Endothelial cell of umbilical vein (primary cell): ENCODE measurements at regions of chr20 and their contacts with region 1.

Region 1: DNA sequence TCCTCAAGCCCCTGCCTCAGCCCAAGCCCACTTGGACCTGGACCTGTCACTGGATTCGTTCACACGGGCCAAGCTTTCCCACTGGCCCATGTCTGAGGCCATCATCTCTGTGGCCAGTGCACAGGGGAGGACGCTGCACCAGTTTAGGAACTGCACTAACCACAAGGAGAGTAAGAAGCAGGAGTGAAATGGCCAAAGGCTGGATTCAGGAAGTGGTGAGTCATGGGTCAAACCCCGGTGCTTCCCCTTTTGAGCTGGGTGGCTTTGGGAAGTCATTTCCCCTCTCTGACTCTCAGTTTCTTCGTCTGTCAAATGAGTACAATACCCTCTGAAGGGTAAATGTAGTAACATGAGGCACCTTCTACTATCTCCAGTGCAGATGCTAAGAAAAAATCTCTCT is 87.9 kb downstream of the CD40 start:
- DNase-seq: peak; percentile 47
- H3K4me3 ChIP-seq: no peak overlapping the region
- H3K27ac ChIP-seq: no peak overlapping the region
- H3K4me1 ChIP-seq: peaks cover 15% of the 10 kb centered on the region
- H3K27me3 ChIP-seq: peaks cover 11 to 16% of the 10 kb centered on the region in 2 experiments
- CTCF ChIP-seq: no peak
- POLR2A ChIP-seq: no peak

Region 2: DNA sequence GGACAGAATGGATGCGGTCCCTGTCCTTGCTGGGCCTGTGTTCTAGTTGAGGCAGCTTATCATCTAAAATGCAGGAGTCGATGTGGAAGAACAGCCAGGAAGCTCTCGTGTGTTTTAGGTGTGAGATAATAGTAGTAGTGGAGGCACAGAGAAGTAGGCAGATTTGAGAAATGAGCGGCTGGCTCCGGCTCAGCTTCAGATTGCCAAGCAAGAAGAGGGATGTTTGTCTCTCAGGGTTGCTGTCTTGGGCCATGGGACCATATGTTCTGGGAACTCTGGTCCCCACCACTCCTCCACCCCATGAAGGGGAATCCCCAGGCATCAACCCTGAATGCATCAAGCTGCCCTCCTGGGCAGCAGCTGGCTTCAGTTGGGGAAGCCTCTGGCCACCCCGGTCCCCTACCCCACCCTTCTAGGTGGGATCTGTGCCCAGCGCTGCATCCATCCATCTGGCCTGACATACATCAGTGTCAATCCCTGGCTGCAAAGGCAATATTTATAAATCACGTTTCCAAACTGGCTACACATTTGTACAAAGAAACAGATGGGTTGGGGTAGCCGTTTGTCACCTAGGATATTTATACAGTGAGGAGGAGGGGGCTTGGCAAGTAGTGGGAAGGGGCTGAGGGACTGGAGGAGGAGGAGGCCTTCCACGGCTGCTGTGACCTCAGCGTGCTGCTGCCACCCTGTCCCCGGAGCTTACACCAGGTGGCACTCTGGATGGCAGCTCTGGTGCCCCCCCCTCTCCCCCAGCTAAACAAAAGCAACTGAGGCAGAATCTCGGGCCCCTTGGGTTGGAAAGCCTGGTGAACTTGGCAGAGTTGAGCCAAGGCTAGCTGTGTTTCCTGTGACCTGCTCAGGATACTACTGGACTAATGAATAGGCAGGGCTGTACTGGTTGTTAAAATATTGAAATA is 23.5 kb before region 1 on chr20:
- CTCF ChIA-PET with region 1: no interaction called
- POLR2A ChIA-PET with region 1: no interaction called
- dilution Hi-C with region 1: no loop called
- intact Hi-C with region 1: no loop called
- DNase-seq: no peak
- H3K4me3 ChIP-seq: no peak overlapping the region
- H3K27ac ChIP-seq: no peak overlapping the region
- H3K4me1 ChIP-seq: no peaks in the 10 kb centered on the region
- H3K27me3 ChIP-seq: no peaks in the 10 kb centered on the region
- CTCF ChIP-seq: no peak
- POLR2A ChIP-seq: no peak

Region 3: GRCh38 chr20:46215913-46216707 is 10.1 kb after region 1 on chr20:
- CTCF ChIA-PET with region 1: interaction called, 3 read pairs
- POLR2A ChIA-PET with region 1: no interaction called
- dilution Hi-C with region 1: no loop called
- intact Hi-C with region 1: loop called (anchors 1 kb)
- DNase-seq: peak; percentile 18
- H3K4me3 ChIP-seq: no peak overlapping the region
- H3K27ac ChIP-seq: no peak overlapping the region
- H3K4me1 ChIP-seq: peaks cover 9% of the 10 kb centered on the region
- H3K27me3 ChIP-seq: no peaks in the 10 kb centered on the region
- CTCF ChIP-seq: no peak
- POLR2A ChIP-seq: no peak

Region 4: DNA sequence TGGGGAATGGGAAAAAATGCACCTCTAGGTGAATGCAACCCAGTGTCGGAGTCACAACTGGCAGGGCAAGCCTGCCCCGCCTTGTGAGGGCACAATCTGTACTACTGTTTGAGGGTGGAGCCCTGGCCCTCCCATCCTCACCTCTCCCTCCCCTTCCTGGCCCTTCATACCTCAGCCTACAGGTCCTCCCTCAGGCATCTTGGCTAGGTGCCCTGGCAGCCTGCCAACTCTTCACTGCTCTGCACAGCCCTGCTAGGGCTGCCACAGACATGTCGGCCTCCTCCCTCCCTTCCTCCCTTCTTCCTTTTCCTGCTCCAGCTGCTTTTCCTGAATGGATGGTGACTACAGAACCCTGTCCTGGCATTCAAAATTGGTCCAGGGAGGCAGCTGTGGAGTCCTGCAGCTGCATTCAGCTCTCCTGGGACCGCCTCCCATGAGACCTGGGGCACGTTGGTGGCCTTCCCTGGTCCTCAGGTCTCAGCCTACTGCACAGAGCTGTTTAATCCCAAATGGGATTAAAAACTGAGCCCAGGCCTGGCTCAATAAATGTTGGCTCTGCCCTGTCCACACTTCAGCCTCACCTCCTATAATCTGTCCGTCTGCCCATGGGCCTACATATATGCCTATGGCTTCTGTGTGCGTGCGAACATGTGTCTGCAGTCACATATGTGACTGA is 49.5 kb after region 1 on chr20:
- CTCF ChIA-PET with region 1: no interaction called
- POLR2A ChIA-PET with region 1: no interaction called
- dilution Hi-C with region 1: no loop called
- intact Hi-C with region 1: loop called (anchors 5 kb)
- DNase-seq: peak; percentile 36
- H3K4me3 ChIP-seq: no peak overlapping the region
- H3K27ac ChIP-seq: no peak overlapping the region
- H3K4me1 ChIP-seq: peaks cover 5% of the 10 kb centered on the region
- H3K27me3 ChIP-seq: peaks cover 9 to 10% of the 10 kb centered on the region in 2 experiments
- CTCF ChIP-seq: no peak
- POLR2A ChIP-seq: no peak